Gastrocnemius medialis (tissue), 4 donors: ENCODE measurements at regions of chr17 and their contacts with region 1.

Region 1: DNA sequence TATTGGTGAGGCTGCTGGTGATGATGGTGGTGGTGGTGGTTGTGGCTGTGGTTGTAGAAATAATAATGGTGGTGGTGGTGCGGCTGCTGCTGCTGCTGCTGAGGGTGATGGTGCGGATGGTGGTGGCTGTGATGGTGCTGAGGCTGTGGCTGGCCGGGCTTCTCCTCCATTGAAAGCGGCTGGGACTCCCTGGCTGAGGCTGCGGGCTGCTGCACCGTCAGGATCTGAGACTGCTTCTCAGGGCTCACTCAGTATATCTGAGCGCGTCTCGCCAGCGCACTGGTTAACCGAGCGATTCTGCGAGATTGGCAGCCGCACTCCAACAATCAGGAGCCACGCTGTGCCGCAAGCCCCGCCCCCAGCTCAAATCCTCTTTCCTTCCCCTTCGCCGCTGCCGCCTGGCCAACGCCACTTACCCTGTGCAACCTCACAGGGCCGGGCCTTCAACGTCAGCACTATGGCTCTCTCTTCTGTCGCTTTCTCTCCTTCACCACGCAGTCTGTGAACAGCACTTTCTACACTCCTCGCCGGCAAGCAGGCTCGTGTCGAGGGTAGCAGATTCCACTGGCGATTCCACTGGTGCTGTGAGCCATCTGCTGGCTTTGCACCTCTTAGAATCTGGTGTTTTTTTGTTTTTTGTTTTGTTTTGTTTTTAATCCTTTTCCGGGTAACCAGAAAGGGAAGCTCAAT is at the start of gene NUFIP2:
- DNase-seq: peak; percentile 99
- ATAC-seq: peak; percentile 91 to 94
- H3K4me3 ChIP-seq: peak within 1 kb of the TSS; percentile 88 to 97 (median 95)
- H3K27ac ChIP-seq: peak within 1 kb of the TSS; percentile 95 to 100 (median 100)
- H3K4me1 ChIP-seq: peaks cover 26 to 30% of the 10 kb centered on the region in 2 donors
- H3K27me3 ChIP-seq: no peaks in the 10 kb centered on the region
- CTCF ChIP-seq: peak in 1 of 5 experiments; percentile 11
- POLR2A ChIP-seq: peak; percentile 100
- total RNA-seq, gene NUFIP2: 20.0 to 33.7 (median 27.8) TPM

Region 2: GRCh38 chr17:28951991-28952975 is 341.8 kb before region 1 on chr17:
- in situ Hi-C with region 1: no loop called
- intact Hi-C with region 1: loop called (anchors 5 kb)
- DNase-seq: peak; percentile 98 to 99
- ATAC-seq: peak; percentile 80 to 85
- H3K4me3 ChIP-seq: peak overlapping the region; percentile 49 to 88 (median 68)
- H3K27ac ChIP-seq: peak overlapping the region; percentile 93 to 96 (median 95)
- H3K4me1 ChIP-seq: peaks cover 22 to 25% of the 10 kb centered on the region in 2 donors
- H3K27me3 ChIP-seq: no peaks in the 10 kb centered on the region
- CTCF ChIP-seq: no peak
- POLR2A ChIP-seq: peak; percentile 55 to 84

Region 3: DNA sequence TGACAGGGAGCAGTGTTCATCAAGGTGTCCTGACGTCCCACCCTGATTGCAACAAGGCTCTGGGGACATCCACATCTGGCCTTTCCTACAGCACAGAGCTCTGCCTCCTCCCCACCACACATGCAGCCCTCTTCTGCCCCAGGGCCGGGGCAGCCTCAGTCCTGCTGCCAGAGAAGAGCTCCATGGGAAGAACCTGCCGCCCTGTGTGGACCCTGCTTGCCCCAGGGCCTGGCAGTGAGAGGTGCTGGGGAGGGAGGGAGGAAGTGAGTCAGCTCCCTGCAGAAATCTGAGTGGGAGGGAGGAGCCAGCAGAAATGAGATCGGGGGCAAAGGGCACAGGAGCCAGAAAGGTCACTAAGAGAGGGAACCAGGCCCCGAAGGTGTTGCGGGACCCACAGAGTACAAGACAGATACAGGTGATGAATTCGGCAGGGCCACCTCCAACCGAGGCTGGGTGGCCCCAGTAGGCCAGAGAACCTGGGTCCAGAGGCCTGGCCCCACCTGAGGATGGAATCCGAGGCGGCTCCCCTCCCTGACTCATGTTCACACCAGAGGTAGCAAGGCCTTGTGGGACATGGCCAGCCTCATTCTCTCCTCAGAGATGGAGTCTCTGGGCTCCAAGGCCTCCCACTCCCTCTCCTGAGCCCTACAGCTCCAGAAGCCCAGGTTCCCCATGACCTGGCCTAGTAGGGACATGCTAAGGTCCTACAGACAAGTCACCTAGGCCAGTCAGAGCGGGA is 138.6 kb before region 1 on chr17:
- in situ Hi-C with region 1: loop called in 1 of 4 experiments (anchors 25 kb)
- intact Hi-C with region 1: no loop called
- DNase-seq: no peak
- ATAC-seq: peak; percentile 63 to 85
- H3K4me3 ChIP-seq: peak overlapping the region in 1 of 4 donors; percentile 44
- H3K27ac ChIP-seq: peak overlapping the region; percentile 69 to 72 (median 70)
- H3K4me1 ChIP-seq: peaks cover 25 to 32% of the 10 kb centered on the region in 2 donors
- H3K27me3 ChIP-seq: no peaks in the 10 kb centered on the region
- CTCF ChIP-seq: no peak
- POLR2A ChIP-seq: no peak

Region 4: DNA sequence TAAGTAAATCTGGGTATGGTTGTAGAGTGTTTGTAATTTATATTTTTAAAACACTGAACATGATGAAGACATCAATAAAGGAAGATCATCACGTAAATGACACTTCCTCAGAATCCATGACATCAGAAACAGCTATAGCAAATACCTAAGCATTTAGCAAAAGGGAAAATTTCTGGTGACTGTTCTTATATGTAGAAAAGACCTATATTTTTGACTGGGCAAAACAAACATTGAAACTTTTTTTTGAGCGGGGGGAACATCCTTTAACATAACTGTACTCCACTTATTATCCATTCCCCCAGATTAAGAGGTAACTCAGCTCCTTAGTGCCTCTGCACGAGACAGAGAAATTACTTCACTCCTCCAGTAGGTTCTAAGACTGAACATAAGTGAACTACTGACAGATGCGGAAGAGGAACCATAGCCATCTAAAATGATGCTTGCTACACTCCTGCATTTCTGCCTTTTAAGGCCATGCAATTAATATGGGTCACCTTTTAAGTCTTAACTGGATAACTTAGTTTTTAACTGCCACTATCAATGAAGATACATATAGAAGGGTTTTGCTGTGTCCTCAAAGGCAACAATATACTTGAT is 38.0 kb before region 1 on chr17:
- in situ Hi-C with region 1: no loop called
- intact Hi-C with region 1: loop called (anchors 2 kb)
- DNase-seq: no peak
- ATAC-seq: no peak
- H3K4me3 ChIP-seq: no peak overlapping the region
- H3K27ac ChIP-seq: no peak overlapping the region
- H3K4me1 ChIP-seq: peaks cover 24 to 36% of the 10 kb centered on the region in 2 donors
- H3K27me3 ChIP-seq: no peaks in the 10 kb centered on the region
- CTCF ChIP-seq: no peak
- POLR2A ChIP-seq: no peak